ENCODE measurements at regions of chr5 and their contacts with region 1.

Region 1: GRCh38 chr5:18483450-18483849 is 849.2 kb downstream of the TAF11L14 start:
- DNase-seq: no peak
- H3K4me3 ChIP-seq: no peak overlapping the region
- H3K27ac ChIP-seq: no peak overlapping the region
- H3K4me1 ChIP-seq: no peaks in the 10 kb centered on the region
- H3K27me3 ChIP-seq: no peaks in the 10 kb centered on the region
- CTCF ChIP-seq: no peak

Region 2: GRCh38 chr5:18662231-18662630 is 178.8 kb after region 1 on chr5:
- CTCF ChIA-PET with region 1: interaction called, 14 read pairs
- POLR2A ChIA-PET with region 1: no interaction called
- intact Hi-C with region 1: no loop called
- DNase-seq: no peak
- H3K4me3 ChIP-seq: no peak overlapping the region
- H3K27ac ChIP-seq: no peak overlapping the region
- H3K4me1 ChIP-seq: no peaks in the 10 kb centered on the region
- H3K27me3 ChIP-seq: no peaks in the 10 kb centered on the region
- CTCF ChIP-seq: no peak